CD8-positive, alpha-beta T cell (primary cell): ENCODE measurements at regions of chr10 and their contacts with region 1.

Region 1: GRCh38 chr10:15168781-15169554 is 475 bp upstream of the NMT2 start:
- DNase-seq: peak; percentile 93 to 98 (median 96)
- ATAC-seq: peak; percentile 87
- H3K4me3 ChIP-seq: peak overlapping the region; percentile 42 to 47
- H3K4me3 Mint-ChIP-seq: peak overlapping the region; percentile 83
- H3K27ac ChIP-seq: peak overlapping the region; percentile 48 to 64
- H3K27ac Mint-ChIP-seq: peak overlapping the region; percentile 93
- H3K4me1 ChIP-seq: peaks cover 40% of the 10 kb centered on the region
- H3K4me1 Mint-ChIP-seq: peaks cover 66% of the 10 kb centered on the region
- H3K27me3 ChIP-seq: no peaks in the 10 kb centered on the region
- H3K27me3 Mint-ChIP-seq: no peaks in the 10 kb centered on the region
- CTCF ChIP-seq: no peak

Region 2: GRCh38 chr10:13299437-13300287 is 1869.3 kb before region 1 on chr10 and contains the start of gene PHYH:
- CTCF ChIA-PET with region 1: no interaction called
- POLR2A ChIA-PET with region 1: interaction called, 3 read pairs
- intact Hi-C with region 1: loop called in 1 of 2 experiments (anchors 2 kb)
- DNase-seq: peak; percentile 65 to 93 (median 80)
- ATAC-seq: peak; percentile 52
- H3K4me3 ChIP-seq: peak within 1 kb of the TSS; percentile 68 to 70
- H3K4me3 Mint-ChIP-seq: peak within 1 kb of the TSS; percentile 84
- H3K27ac ChIP-seq: peak within 1 kb of the TSS; percentile 81 to 91
- H3K27ac Mint-ChIP-seq: peak within 1 kb of the TSS; percentile 94
- H3K4me1 ChIP-seq: peaks cover 28% of the 10 kb centered on the region
- H3K4me1 Mint-ChIP-seq: peaks cover 26% of the 10 kb centered on the region
- H3K27me3 ChIP-seq: no peaks in the 10 kb centered on the region
- H3K27me3 Mint-ChIP-seq: no peaks in the 10 kb centered on the region
- CTCF ChIP-seq: no peak
- total RNA-seq, gene PHYH: 12.6 TPM

Region 3: DNA sequence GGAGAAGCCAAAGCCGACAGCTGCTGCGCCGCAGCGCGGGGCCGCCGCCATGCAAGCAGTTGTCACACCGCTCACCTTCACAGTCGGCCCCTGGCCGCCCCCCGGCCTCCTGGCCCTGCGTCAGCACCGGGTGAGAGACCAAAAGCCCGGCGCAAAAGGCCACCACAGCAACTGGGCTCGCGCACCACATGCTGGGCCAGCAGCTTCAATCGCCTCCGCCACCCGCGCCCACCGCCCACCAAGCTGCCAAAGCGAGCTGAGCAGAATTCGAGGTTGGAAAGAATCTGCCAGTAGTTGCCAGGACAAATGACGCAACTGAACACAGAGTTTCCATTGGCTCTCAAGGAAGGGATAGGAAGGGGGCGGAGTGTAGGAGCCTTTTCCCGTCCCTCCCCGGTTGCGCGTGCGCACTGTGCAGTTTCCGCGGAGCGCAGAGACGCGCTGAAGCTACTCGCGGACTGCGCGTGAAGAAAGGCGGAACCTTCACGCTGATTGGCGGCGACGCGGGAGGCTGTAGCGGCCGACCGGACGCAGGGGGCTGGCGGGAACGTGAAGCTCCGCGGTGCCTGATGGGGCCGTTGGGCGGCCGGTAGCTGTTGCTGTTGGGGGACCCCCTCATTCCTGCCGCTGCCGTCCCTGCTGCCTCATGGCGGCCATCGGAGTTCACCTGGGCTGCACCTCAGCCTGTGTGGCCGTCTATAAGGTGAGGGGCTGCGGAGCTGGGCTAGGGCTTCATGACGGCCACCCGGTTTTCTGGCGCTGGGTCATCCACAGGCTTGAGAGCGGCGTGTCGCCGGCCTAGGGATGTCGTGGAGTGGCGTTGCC is 331.0 kb before region 1 on chr10 and contains the starts of genes CDNF, HSPA14 and MSANTD7:
- CTCF ChIA-PET with region 1: no interaction called
- POLR2A ChIA-PET with region 1: no interaction called
- intact Hi-C with region 1: loop called (anchors 1 to 5 kb)
- DNase-seq: peak; percentile 98 to 100 (median 99)
- ATAC-seq: peak; percentile 95
- H3K4me3 ChIP-seq: peak within 1 kb of the TSS; percentile 90 to 96
- H3K4me3 Mint-ChIP-seq: peak within 1 kb of the TSS; percentile 98
- H3K27ac ChIP-seq: peak within 1 kb of the TSS; percentile 86 to 94
- H3K27ac Mint-ChIP-seq: peak within 1 kb of the TSS; percentile 99
- H3K4me1 ChIP-seq: peaks cover 17% of the 10 kb centered on the region
- H3K4me1 Mint-ChIP-seq: peaks cover 32% of the 10 kb centered on the region
- H3K27me3 ChIP-seq: no peaks in the 10 kb centered on the region
- H3K27me3 Mint-ChIP-seq: no peaks in the 10 kb centered on the region
- CTCF ChIP-seq: no peak
- total RNA-seq, gene CDNF: 2.3 to 2.5 TPM
- total RNA-seq, gene HSPA14: 37.7 to 37.8 TPM
- total RNA-seq, gene MSANTD7: 20.2 to 22.3 TPM

Region 4: DNA sequence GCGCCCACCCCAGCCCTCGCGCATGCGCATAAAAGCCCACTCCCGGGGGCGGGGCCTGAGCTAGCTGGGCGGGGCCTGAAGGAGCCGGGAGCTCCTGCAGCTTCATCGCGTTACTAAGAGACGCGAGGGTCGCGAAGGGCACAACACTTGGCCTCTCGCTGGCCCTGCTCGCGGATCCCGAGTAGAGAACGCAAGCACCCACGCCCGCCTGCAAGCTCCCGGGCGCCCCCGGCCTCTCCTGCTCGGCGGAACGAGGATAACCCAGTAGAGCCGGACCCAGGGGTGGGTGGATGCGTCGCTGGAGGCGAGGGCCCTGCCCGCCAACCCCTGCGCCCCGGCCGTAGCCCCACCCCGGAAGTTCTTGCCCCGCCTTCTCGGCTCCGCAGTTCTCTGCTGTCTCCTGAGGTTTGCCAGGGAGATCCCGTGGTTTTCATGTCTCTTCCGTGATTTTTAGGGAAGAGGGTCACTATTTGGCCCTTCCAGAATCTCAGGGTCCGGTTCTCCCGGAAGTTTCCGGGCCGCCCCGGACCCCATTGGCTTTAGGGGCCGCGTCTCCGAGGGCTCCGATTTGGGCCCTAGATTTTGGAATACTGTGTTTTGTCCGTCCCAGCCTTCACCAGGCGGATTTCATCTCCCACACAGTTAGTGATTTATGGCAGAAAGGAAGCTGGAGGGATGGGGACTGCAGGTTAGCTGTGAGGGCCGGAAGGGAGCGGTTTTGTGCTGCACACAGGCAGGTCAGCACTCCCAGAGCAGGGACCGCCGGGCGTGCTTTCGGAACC is 209.5 kb before region 1 on chr10 and contains the start of gene MEIG1:
- CTCF ChIA-PET with region 1: no interaction called
- POLR2A ChIA-PET with region 1: no interaction called
- intact Hi-C with region 1: loop called (anchors 1 to 2 kb)
- DNase-seq: peak; percentile 79 to 98 (median 92)
- ATAC-seq: peak; percentile 83
- H3K4me3 ChIP-seq: peak within 1 kb of the TSS; percentile 77 to 95
- H3K4me3 Mint-ChIP-seq: peak within 1 kb of the TSS; percentile 97
- H3K27ac ChIP-seq: peak within 1 kb of the TSS; percentile 86 to 88
- H3K27ac Mint-ChIP-seq: peak within 1 kb of the TSS; percentile 95
- H3K4me1 ChIP-seq: peaks cover 11% of the 10 kb centered on the region
- H3K4me1 Mint-ChIP-seq: peaks cover 24% of the 10 kb centered on the region
- H3K27me3 ChIP-seq: no peaks in the 10 kb centered on the region
- H3K27me3 Mint-ChIP-seq: no peaks in the 10 kb centered on the region
- CTCF ChIP-seq: no peak
- total RNA-seq, gene MEIG1: not detected

Region 5: DNA sequence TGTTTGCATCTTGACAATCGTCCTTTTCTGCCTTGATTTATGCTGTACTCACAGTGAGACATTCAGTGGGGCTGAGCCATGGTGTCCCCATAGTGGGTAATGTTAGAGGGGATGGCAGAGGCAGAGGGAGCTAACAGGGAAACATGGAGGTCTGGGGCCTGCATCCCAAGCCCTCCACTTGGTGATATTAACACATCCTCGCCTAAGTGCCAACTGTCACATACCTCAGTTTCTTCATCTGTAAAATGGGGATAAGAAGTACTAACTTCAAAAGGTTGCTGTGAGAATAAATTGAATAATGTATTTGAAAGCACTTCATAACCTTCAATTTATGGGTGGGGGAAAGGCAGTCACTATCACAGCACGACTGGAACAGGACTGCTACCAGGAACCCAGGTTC is 44.1 kb before region 1 on chr10:
- CTCF ChIA-PET with region 1: no interaction called
- POLR2A ChIA-PET with region 1: no interaction called
- intact Hi-C with region 1: loop called in 1 of 2 experiments (anchors 5 kb)
- DNase-seq: no peak
- ATAC-seq: no peak
- H3K4me3 ChIP-seq: no peak overlapping the region
- H3K4me3 Mint-ChIP-seq: no peak overlapping the region
- H3K27ac ChIP-seq: no peak overlapping the region
- H3K27ac Mint-ChIP-seq: peak overlapping the region; percentile 4
- H3K4me1 ChIP-seq: no peaks in the 10 kb centered on the region
- H3K4me1 Mint-ChIP-seq: peaks cover 1% of the 10 kb centered on the region
- H3K27me3 ChIP-seq: no peaks in the 10 kb centered on the region
- H3K27me3 Mint-ChIP-seq: no peaks in the 10 kb centered on the region
- CTCF ChIP-seq: no peak

Region 6: GRCh38 chr10:15245530-15245929 is 76.6 kb after region 1 on chr10:
- CTCF ChIA-PET with region 1: no interaction called
- POLR2A ChIA-PET with region 1: interaction called, 5 read pairs
- intact Hi-C with region 1: loop called (anchors 1 to 5 kb)
- DNase-seq: peak in 6 of 9 experiments; percentile 23 to 59 (median 51)
- ATAC-seq: peak; percentile 73
- H3K4me3 ChIP-seq: no peak overlapping the region
- H3K4me3 Mint-ChIP-seq: no peak overlapping the region
- H3K27ac ChIP-seq: no peak overlapping the region
- H3K27ac Mint-ChIP-seq: no peak overlapping the region
- H3K4me1 ChIP-seq: no peaks in the 10 kb centered on the region
- H3K4me1 Mint-ChIP-seq: peaks cover 14% of the 10 kb centered on the region
- H3K27me3 ChIP-seq: no peaks in the 10 kb centered on the region
- H3K27me3 Mint-ChIP-seq: no peaks in the 10 kb centered on the region
- CTCF ChIP-seq: peak; percentile 37